Heart left ventricle (tissue), 16 donors: ENCODE measurements at regions of chr5 and their contacts with region 1.

Region 1: GRCh38 chr5:135356522-135357318 is 42.3 kb downstream of the MACROH2A1 start:
- DNase-seq: peak; percentile 84 to 91 (median 89)
- ATAC-seq: peak; percentile 93 to 98 (median 94)
- H3K4me3 ChIP-seq: no peak overlapping the region
- H3K27ac ChIP-seq: peak overlapping the region; percentile 34 to 86 (median 62)
- H3K4me1 ChIP-seq: peaks cover 4 to 55% (median 45%) of the 10 kb centered on the region in 12 donors
- H3K27me3 ChIP-seq: no peaks in the 10 kb centered on the region
- CTCF ChIP-seq: no peak
- POLR2A ChIP-seq: no peak

Region 2: DNA sequence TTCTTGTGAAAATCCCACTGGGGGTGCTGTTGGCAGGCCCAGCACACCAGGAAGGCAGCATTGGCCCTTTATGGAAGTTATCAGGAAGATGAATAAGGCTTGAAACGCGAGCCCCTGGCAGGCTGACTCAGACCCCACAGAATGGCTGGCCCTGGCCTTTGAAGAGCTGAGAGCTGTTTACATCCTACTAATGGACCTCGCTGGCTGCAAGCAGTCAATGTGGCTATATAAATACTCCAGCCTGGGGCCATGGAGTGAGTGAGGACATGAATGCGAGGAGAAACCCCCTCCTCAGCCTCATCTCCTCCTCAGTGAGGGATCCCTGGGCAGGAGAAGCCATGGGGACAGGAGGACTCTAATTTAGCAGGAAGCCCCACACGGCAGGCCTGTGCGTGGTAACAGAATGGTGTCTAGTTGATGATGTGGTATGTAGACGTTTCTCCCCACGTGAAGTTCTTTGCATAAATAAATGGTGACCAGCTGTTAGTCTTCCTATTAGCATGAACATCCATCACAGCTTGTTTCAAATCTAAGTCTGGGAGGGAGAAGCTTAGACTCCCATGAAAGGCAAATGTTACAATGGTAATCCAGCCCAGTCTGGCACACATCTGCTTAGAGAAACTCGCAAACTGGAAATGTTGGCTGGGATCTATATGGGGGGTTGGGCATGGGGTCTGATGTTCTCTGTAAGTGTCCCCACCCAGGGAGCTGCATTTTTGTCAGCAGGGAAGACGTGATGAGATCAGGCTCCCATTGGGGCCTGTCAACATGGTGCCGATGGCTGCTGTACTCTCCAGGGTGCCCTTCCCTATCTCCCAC is 147.6 kb before region 1 on chr5:
- intact Hi-C with region 1: no loop called
- DNase-seq: no peak
- ATAC-seq: no peak
- H3K4me3 ChIP-seq: no peak overlapping the region
- H3K27ac ChIP-seq: peak overlapping the region in 1 of 12 donors; percentile 25
- H3K4me1 ChIP-seq: peaks cover 0 to 11% (median 0%) of the 10 kb centered on the region in 12 donors
- H3K27me3 ChIP-seq: no peaks in the 10 kb centered on the region
- CTCF ChIP-seq: no peak
- POLR2A ChIP-seq: no peak

Region 3: DNA sequence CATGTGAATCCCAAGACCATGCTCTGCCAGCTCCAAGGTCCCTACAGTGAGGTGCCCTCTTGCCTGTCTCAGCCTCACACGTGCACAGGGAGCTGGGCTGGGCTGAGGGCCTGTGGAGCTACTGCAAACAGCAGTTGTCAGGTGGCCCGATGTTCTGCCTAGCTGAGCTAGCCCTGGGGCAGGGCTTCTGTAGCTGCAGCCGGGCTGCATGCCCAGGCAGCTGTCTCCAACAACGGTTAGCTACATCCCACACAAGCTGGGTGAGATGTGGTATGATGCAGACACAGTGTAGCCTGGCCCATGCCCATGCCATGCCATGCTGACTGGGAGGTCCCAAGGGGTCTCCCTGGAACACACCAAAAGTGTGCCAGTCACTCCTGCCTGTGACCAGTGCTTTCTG is 19.7 kb before region 1 on chr5:
- intact Hi-C with region 1: no loop called
- DNase-seq: peak in 2 of 5 donors; percentile 33 to 65
- ATAC-seq: peak; percentile 32 to 89 (median 78)
- H3K4me3 ChIP-seq: no peak overlapping the region
- H3K27ac ChIP-seq: peak overlapping the region in 1 of 12 donors; percentile 14
- H3K4me1 ChIP-seq: peaks cover 0 to 19% (median 2%) of the 10 kb centered on the region in 12 donors
- H3K27me3 ChIP-seq: no peaks in the 10 kb centered on the region
- CTCF ChIP-seq: no peak
- POLR2A ChIP-seq: no peak

Region 4: GRCh38 chr5:135392256-135392655 is 35.5 kb after region 1 on chr5:
- intact Hi-C with region 1: loop called in 3 of 10 experiments (anchors 5 kb)
- DNase-seq: no peak
- ATAC-seq: peak in 3 of 4 donors; percentile 9 to 39 (median 13)
- H3K4me3 ChIP-seq: no peak overlapping the region
- H3K27ac ChIP-seq: peak overlapping the region in 7 of 12 donors; percentile 9 to 96 (median 38)
- H3K4me1 ChIP-seq: peaks cover 8 to 99% (median 88%) of the 10 kb centered on the region in 12 donors
- H3K27me3 ChIP-seq: no peaks in the 10 kb centered on the region
- CTCF ChIP-seq: no peak
- POLR2A ChIP-seq: no peak

Region 5: DNA sequence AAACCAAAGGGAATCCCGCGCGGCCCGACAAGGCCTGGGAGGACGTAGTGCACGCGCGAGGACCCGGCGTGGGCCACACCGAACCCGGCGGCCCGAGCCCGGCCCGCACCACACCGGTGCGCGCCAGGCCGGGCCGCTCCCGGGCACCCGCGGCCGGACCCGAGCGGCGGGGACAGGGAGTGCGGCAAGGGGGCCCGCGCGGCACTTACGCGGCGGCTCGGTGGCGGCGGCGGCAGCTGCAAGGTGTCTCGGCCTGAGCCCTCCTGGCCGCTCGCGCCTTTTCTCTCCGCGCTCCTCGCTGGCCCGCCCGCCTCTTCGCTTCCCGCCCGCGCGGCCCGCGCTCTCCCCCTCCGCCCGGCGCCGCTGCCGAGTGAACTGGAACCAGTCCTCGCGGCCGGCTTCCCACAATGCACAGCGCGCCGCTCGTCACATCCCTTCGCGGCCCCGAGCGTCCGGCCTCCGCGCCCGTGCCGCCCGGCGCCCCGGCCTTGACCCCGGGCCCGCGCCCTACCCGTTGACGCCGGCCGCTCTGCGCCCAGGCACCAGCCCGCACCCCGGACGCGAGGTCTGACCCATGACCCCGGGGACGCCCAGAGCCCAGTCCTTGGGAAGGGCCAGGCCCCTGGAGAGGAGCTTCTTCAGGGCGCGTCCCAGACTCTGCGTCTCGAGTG is 42.3 kb after region 1 on chr5 and contains the start of gene MACROH2A1:
- intact Hi-C with region 1: loop called in 5 of 10 experiments (anchors 1 to 5 kb)
- DNase-seq: peak; percentile 92 to 95 (median 93)
- ATAC-seq: peak; percentile 78 to 98 (median 96)
- H3K4me3 ChIP-seq: peak within 1 kb of the TSS; percentile 68 to 100 (median 96)
- H3K27ac ChIP-seq: peak within 1 kb of the TSS; percentile 86 to 99 (median 96)
- H3K4me1 ChIP-seq: peaks cover 4 to 53% (median 47%) of the 10 kb centered on the region in 12 donors
- H3K27me3 ChIP-seq: no peaks in the 10 kb centered on the region
- CTCF ChIP-seq: peak in 3 of 12 donors; percentile 11 to 22 (median 14)
- POLR2A ChIP-seq: peak; percentile 44 to 87
- total RNA-seq, gene MACROH2A1: 86.5 to 170 (median 112) TPM

Region 6: DNA sequence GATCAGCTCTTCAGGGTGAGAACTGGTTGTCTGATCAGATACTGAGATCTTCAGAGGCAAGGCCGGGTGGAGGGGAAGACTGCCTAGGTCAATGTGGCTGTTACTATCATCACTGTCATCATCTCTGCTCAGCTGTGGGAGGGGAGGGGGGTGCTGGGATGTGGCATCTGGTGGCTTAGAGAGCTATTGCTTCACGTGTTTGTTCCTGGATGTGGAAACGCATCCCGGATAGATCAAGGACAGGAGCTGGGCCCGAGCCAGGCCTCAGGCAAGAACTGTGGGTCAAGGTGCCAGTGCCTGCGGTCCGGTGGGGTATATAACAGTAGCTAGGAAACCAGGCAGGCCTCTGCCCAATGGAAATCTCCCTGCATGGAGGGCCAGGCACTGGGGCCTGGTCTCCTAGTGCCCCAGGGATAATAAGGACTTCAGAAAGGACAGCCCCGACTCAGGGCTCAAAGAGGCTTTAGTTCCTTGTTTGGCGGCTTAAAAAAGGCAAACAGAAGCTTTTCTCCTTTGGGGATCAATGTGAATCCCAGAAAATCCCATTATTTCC is 125.7 kb after region 1 on chr5:
- intact Hi-C with region 1: no loop called
- DNase-seq: no peak
- ATAC-seq: no peak
- H3K4me3 ChIP-seq: no peak overlapping the region
- H3K27ac ChIP-seq: no peak overlapping the region
- H3K4me1 ChIP-seq: no peaks in the 10 kb centered on the region
- H3K27me3 ChIP-seq: peaks cover 0 to 60% (median 25%) of the 10 kb centered on the region in 9 donors
- CTCF ChIP-seq: no peak
- POLR2A ChIP-seq: no peak

Region 7: DNA sequence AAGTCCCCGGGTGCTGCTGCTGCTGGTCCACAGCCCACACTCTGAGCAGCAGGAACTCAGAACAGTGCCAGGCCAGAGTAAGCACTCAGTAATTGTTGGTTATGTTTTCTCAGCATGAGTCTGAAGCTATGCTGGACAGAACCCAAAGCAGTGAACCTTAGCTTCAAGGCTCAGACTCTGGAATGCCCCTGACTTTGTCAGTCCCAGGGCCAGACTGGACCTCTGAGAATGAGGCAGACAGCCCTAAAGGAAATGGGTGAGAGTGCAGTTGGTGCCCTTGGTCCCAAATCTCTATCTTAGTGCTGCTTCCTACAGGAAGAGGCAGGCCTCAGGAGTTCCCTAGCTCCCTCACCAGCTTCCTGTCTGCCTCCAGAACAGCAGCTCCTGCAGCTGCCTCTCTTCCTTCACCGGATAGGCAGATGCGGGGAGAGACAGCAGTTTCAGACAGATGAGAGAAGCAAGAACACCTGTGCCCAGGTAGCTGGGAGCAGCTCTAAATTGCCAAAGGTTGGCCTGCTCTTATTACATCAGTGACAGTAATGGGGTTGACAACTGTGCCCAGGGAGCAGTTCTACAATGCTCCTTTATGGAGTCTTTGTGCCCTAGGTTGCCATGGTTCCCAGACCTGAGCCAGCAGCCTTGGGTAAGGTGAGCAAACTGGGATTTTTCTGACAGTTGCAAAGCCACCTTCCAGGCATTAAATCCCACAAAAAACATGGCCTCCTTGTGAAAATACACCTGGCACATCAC is 304.3 kb after region 1 on chr5:
- intact Hi-C with region 1: no loop called
- DNase-seq: no peak
- ATAC-seq: no peak
- H3K4me3 ChIP-seq: no peak overlapping the region
- H3K27ac ChIP-seq: no peak overlapping the region
- H3K4me1 ChIP-seq: no peaks in the 10 kb centered on the region
- H3K27me3 ChIP-seq: peaks cover 0 to 9% (median 0%) of the 10 kb centered on the region in 9 donors
- CTCF ChIP-seq: no peak
- POLR2A ChIP-seq: no peak